ENCODE measurements at regions of chr18 and their contacts with region 1.

Region 1: DNA sequence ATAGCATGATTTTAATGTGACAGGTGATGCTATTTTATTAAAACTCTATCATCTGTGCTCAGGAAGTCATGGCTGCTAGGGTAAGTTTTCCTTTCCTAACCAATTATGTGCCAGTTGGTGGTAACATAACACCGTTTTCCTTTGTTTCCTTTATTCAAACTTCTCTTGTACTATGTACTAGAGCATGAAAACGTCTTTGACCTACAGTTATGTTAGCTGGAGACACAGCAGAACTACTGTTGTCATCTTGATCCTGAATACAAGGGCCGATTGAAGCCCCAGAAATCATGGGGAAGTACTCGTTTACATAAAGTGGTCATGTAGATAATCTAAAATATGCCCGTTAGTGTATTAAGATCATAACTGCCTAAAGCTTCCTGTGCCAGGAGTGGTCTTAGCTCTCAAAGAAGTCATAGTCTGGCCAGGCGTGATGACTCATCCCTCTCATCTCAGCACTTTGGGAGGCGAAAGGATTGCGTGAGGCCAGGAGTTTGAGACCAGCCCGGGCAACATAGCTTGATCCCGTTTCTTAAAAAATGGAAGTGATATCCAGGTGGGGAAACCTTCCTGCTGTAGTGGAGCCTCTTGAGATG is 20.5 kb downstream of the NEDD4L start:
- DNase-seq: no peak
- CTCF ChIP-seq: no peak

Region 2: GRCh38 chr18:58051765-58052460 is 12.6 kb before region 1 on chr18:
- CTCF ChIA-PET with region 1: interaction called, 16 read pairs
- POLR2A ChIA-PET with region 1: no interaction called
- DNase-seq: peak; percentile 46
- CTCF ChIP-seq: peak; percentile 40